ENCODE measurements at regions of chr7 and their contacts with region 1.

Region 1: GRCh38 chr7:135801045-135801693 is 52.6 kb upstream of the FAM180A start:
- DNase-seq: peak; percentile 22
- ATAC-seq: peak; percentile 47
- H3K4me3 Mint-ChIP-seq: no peak overlapping the region
- H3K27ac Mint-ChIP-seq: no peak overlapping the region
- H3K4me1 Mint-ChIP-seq: peaks cover 4% of the 10 kb centered on the region
- H3K27me3 Mint-ChIP-seq: peaks cover 9% of the 10 kb centered on the region
- CTCF ChIP-seq: peak; percentile 76

Region 2: DNA sequence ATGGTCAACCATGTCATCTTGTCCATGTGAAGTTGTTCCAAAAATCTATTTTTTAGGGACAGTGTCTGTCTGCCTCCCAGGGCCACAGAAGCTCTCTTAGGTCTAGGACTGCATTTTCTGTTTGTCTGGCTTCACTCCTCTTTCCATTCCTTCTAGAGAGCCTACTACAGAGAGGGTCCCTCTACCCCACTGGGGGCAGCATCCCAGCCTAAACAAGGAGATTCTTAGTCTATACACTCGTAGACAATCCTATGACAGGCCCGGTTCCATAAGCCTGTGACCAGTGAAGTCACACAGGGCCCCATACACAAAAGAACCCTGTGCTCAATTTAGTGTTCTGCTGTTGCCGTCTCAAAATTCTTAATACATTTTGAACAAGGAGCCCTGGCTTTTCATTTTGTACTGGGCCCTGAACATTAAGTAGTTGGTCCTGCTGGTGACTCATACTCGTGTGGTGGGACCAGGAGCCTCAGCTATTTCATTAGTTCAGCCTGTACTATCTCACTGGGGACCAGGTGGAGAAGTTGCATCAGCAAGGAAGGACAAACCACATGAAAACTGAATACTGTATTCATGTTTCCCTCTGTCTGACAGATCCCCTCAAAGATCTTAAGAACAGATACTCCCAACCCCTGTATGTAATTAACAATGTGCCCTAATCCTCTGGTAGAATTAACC is 29.1 kb before region 1 on chr7:
- CTCF ChIA-PET with region 1: no interaction called
- POLR2A ChIA-PET with region 1: no interaction called
- intact Hi-C with region 1: no loop called
- DNase-seq: no peak
- ATAC-seq: no peak
- H3K4me3 Mint-ChIP-seq: no peak overlapping the region
- H3K27ac Mint-ChIP-seq: no peak overlapping the region
- H3K4me1 Mint-ChIP-seq: no peaks in the 10 kb centered on the region
- H3K27me3 Mint-ChIP-seq: peaks cover 5% of the 10 kb centered on the region
- CTCF ChIP-seq: no peak

Region 3: DNA sequence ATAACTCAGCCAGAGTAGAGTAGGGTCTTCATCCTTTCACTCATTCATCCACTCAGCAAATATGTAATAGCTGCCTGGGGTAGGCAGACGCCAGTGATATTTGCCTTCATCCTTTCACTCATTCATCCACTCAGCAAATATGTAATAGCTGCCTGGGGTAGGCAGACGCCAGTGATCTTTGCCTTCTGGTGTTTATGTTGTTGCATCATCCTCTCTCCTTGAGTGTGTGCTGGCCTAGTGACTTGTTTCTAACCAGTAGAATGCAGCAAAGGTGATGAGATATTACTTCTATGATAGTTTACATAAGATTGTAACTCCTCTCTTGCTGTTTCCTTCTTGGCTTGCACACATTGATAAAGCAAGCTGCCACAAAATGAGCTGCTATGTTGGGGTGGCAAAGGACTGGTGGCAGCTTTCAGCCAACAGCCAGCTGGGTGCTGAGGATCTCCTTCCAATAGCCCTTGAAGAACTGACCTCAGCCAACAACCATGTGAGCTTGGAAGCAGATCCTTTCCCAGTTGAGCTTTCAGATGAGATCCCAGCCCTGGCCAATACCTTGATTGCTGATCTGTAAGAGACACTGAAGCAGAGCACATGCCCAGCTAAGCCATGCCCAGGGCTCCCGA is 199.2 kb after region 1 on chr7:
- CTCF ChIA-PET with region 1: interaction called, 13 read pairs
- POLR2A ChIA-PET with region 1: no interaction called
- intact Hi-C with region 1: no loop called
- DNase-seq: no peak
- ATAC-seq: no peak
- H3K4me3 Mint-ChIP-seq: no peak overlapping the region
- H3K27ac Mint-ChIP-seq: no peak overlapping the region
- H3K4me1 Mint-ChIP-seq: no peaks in the 10 kb centered on the region
- H3K27me3 Mint-ChIP-seq: no peaks in the 10 kb centered on the region
- CTCF ChIP-seq: no peak

Measured in activated CD8-positive, alpha-beta T cell treated with anti-CD3 and anti-CD28 coated beads for 36 hours (primary cell).